ENCODE measurements at regions of chr6 and their contacts with region 1.

Region 1: DNA sequence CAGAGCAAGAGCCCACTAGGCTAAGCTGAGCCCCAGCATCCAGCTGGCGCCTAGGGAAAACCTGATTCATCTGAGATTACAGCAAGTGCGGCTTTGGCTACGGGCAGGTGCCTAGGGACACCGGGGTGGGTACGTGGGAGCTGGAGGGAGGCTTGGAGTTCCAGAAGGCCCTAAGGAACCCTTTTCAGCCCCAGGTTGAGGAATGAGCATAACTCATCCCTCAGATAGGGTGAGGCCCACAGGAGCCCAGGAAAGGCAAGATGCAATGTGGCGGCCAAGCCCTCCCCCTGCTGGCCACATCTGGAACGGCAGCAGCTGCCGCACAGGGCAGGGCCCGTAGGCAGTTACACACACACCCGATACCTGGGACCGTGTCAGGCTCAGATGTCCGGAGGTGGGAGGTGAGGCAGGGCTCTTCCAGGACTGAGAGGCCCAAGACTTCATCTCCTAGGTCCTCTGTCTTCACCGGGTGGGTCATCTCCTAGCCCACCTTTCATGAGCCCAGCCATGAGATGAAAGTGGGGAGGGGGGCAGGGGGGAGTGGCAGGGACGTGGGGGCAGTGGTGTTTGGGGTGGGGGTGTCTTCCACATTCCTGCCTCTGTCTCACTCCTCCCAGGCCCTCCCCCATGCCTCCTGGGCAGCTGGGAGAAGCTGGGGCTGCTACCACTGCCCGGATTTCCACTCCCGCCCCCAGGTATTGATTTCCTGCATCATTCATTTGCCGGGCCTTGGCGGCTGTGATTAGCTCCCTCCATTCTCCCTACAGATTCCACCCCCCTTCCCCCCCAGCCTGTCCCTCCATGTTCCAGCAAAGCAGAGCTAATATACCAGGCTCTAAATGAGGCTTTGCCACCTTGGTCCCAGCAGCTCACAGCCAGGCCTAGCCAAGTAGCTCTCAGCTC is 5.5 kb downstream of the MDGA1 start:
- DNase-seq: peak; percentile 88
- ATAC-seq: peak; percentile 88
- H3K4me3 Mint-ChIP-seq: no peak overlapping the region
- H3K27ac Mint-ChIP-seq: no peak overlapping the region
- H3K4me1 Mint-ChIP-seq: peaks cover 23% of the 10 kb centered on the region
- H3K27me3 Mint-ChIP-seq: peaks cover 38% of the 10 kb centered on the region

Region 2: GRCh38 chr6:37381579-37381978 is 310.6 kb before region 1 on chr6:
- CTCF ChIA-PET with region 1: interaction called, 5 read pairs
- POLR2A ChIA-PET with region 1: no interaction called
- intact Hi-C with region 1: loop called (anchors 1 to 5 kb)
- DNase-seq: peak; percentile 31
- ATAC-seq: peak; percentile 68
- H3K4me3 Mint-ChIP-seq: no peak overlapping the region
- H3K27ac Mint-ChIP-seq: no peak overlapping the region
- H3K4me1 Mint-ChIP-seq: no peaks in the 10 kb centered on the region
- H3K27me3 Mint-ChIP-seq: no peaks in the 10 kb centered on the region

Region 3: DNA sequence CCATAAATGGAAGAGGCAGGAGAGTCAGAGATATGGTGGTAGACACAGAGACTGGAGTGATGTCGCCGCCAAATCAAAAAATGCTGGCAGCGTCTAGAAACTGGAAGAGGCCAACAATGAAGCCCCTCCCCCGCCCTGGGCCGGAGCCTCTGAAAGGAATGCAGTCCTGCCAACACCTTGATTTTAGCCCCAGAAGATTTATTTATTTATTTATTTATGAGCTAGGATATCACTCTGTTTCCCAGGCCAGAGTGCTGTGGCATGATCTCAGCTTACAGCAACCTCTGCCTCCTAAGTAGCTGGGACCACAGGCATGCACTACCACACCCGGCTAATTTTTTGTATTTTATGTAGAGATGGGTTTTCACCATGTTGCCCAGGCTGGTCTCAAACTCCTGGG is 109.8 kb before region 1 on chr6:
- CTCF ChIA-PET with region 1: interaction called, 11 read pairs
- POLR2A ChIA-PET with region 1: no interaction called
- intact Hi-C with region 1: loop called in 1 of 2 experiments (anchors 5 kb)
- DNase-seq: no peak
- ATAC-seq: no peak
- H3K4me3 Mint-ChIP-seq: no peak overlapping the region
- H3K27ac Mint-ChIP-seq: no peak overlapping the region
- H3K4me1 Mint-ChIP-seq: no peaks in the 10 kb centered on the region
- H3K27me3 Mint-ChIP-seq: no peaks in the 10 kb centered on the region

Region 4: DNA sequence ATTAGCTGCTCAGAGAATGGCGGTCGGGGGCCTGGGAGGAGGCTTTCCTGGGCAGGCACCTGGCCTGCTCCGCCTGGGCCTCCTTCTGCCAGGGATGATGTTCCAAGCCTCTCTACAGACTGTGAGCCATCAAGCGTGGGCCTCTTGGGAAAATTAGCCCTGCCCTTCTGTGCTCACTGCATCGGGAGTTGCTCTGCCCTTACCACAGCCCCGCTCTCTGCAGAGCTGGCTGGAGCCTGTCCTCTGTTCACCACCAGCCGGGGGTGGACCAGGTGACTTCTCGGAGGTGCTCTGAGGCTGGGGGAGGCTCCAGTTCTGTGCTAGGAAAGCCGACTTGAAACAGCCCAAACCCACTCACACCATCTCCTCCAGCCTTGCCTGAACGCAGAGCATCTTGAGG is 18.7 kb before region 1 on chr6:
- CTCF ChIA-PET with region 1: interaction called, 17 read pairs
- POLR2A ChIA-PET with region 1: no interaction called
- intact Hi-C with region 1: no loop called
- DNase-seq: no peak
- ATAC-seq: no peak
- H3K4me3 Mint-ChIP-seq: no peak overlapping the region
- H3K27ac Mint-ChIP-seq: no peak overlapping the region
- H3K4me1 Mint-ChIP-seq: no peaks in the 10 kb centered on the region
- H3K27me3 Mint-ChIP-seq: no peaks in the 10 kb centered on the region